ENCODE measurements at regions of chr2 and their contacts with region 1.

Region 1: GRCh38 chr2:46364797-46365457 is 67.7 kb downstream of the EPAS1 start:
- DNase-seq: no peak
- H3K4me3 ChIP-seq: no peak overlapping the region
- H3K27ac ChIP-seq: peak overlapping the region in 1 of 2 donors; percentile 10
- H3K4me1 ChIP-seq: peaks cover 0 to 23% (median 4%) of the 10 kb centered on the region in 4 donors
- H3K27me3 ChIP-seq: no peaks in the 10 kb centered on the region
- CTCF ChIP-seq: peak; percentile 80 to 82

Region 2: DNA sequence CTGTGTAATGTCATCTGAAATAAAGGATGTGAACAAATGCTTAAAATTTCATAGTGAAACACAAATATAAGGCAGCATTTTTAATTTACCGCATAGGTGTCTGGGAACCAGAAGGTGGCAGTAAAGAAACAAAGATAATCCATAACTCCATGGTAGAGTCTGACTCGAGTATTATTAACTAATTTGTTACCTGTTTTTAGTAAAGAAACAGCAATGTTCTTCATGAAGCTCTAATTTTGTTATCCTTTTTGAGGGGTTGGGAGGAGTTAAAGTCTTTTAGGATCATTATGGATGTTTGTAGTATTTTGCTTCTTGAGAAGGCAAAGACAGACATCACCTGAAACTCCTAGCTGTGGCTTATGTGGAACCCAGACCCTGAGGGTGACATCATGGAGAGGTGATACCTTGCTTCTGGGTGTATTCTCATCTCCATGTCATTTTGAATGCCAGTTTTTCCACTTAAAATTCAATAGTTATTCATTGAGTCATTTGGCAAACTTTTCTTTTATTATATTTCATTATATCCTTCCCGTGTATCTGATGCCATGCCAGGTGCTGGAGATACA is 353.9 kb before region 1 on chr2:
- intact Hi-C with region 1: loop called (anchors 5 kb)
- DNase-seq: no peak
- H3K4me3 ChIP-seq: no peak overlapping the region
- H3K27ac ChIP-seq: no peak overlapping the region
- H3K4me1 ChIP-seq: peaks cover 0 to 16% (median 6%) of the 10 kb centered on the region in 4 donors
- H3K27me3 ChIP-seq: no peaks in the 10 kb centered on the region
- CTCF ChIP-seq: peak; percentile 66 to 82

Region 3: GRCh38 chr2:46062637-46063412 is 302.1 kb before region 1 on chr2:
- intact Hi-C with region 1: loop called (anchors 5 kb)
- DNase-seq: peak; percentile 89 to 95
- H3K4me3 ChIP-seq: no peak overlapping the region
- H3K27ac ChIP-seq: no peak overlapping the region
- H3K4me1 ChIP-seq: peaks cover 0 to 12% (median 9%) of the 10 kb centered on the region in 4 donors
- H3K27me3 ChIP-seq: no peaks in the 10 kb centered on the region
- CTCF ChIP-seq: peak; percentile 88 to 90

Region 4: DNA sequence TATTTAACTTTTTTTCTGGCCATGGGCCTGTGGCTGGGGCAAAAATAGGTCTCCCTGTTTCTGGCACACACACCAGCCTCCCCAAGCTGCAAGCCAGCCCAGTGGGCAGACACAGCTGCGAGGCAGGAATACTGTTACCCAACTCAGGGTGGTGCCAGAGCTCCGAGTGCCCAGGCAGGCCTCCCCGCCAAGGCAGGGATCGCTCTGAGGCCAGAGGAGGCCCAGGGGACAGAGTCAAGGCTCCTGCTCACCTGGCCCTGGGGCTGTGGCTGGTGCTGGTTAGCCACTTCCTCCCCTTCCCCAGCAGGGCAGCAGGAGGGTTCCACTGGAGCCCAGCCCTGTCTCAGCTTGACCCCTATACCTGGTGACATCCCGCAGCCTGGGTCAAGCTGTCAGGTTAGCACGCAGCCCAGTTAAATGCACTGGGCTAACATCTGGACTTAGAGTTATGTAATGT is 134.8 kb before region 1 on chr2:
- intact Hi-C with region 1: loop called (anchors 5 kb)
- DNase-seq: peak; percentile 53 to 85
- H3K4me3 ChIP-seq: no peak overlapping the region
- H3K27ac ChIP-seq: peak overlapping the region in 1 of 2 donors; percentile 46
- H3K4me1 ChIP-seq: peaks cover 0 to 20% (median 6%) of the 10 kb centered on the region in 4 donors
- H3K27me3 ChIP-seq: no peaks in the 10 kb centered on the region
- CTCF ChIP-seq: peak; percentile 40 to 54

Region 5: GRCh38 chr2:46876741-46877384 is 511.9 kb after region 1 on chr2:
- intact Hi-C with region 1: loop called (anchors 10 kb)
- DNase-seq: peak in 1 of 2 donors; percentile 21
- H3K4me3 ChIP-seq: no peak overlapping the region
- H3K27ac ChIP-seq: peak overlapping the region; percentile 7 to 54
- H3K4me1 ChIP-seq: peaks cover 0 to 63% (median 39%) of the 10 kb centered on the region in 4 donors
- H3K27me3 ChIP-seq: no peaks in the 10 kb centered on the region
- CTCF ChIP-seq: peak; percentile 53 to 59

Measured in tibial artery (tissue), 4 donors.